ENCODE measurements at regions of chr5 and their contacts with region 1.

Region 1: GRCh38 chr5:104178829-104179456 is 616.4 kb upstream of the NUDT12 start:
- DNase-seq: peak; percentile 51
- ATAC-seq: peak; percentile 94
- H3K4me3 ChIP-seq: no peak overlapping the region
- H3K27ac ChIP-seq: no peak overlapping the region; the same call in 1 of the 2 replicates
- H3K4me1 ChIP-seq: no peaks in the 10 kb centered on the region
- H3K27me3 ChIP-seq: no peaks in the 10 kb centered on the region
- CTCF ChIP-seq: peak; percentile 74

Region 2: GRCh38 chr5:103582364-103582763 is 596.6 kb before region 1 on chr5:
- CTCF ChIA-PET with region 1: no interaction called
- POLR2A ChIA-PET with region 1: no interaction called
- in situ Hi-C with region 1: no loop called
- intact Hi-C with region 1: loop called (anchors 1 kb)
- DNase-seq: no peak
- ATAC-seq: no peak
- H3K4me3 ChIP-seq: no peak overlapping the region
- H3K27ac ChIP-seq: no peak overlapping the region
- H3K4me1 ChIP-seq: no peaks in the 10 kb centered on the region
- H3K27me3 ChIP-seq: peaks cover 6% of the 10 kb centered on the region
- CTCF ChIP-seq: peak; percentile 59; the same call in 1 of the 2 replicates

Region 3: DNA sequence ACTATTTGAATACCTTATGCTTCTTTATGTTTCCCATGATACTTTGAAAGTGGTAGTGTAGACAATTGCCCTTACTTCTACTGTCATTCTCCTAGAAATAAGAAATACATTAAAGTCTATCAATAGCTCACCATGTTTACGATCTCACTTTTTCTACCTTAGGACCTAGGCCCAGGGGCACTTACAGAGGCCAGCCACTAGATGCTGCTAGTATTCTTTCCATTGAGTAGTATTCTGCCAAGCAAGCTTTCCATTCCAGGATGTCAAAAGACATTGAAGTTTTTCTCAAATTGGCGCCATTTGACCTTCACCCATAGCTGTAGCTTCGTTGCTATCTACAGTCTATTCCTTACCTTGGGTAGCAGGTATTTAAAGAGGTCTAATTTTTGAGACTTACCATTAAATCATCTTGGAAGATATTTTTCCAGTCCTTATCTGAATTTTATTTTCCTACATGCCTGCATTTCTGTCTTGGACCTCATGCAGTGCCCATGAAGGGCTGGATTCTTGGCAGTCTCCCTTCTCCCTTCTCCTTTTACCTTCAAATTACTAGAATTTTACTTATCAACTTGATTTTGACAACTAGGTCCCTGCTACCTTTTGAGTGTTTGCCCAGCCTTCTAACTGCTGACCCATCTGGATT is 370.4 kb before region 1 on chr5:
- CTCF ChIA-PET with region 1: interaction called, 10 read pairs
- POLR2A ChIA-PET with region 1: no interaction called
- in situ Hi-C with region 1: no loop called
- intact Hi-C with region 1: loop called (anchors 1 kb)
- DNase-seq: peak; percentile 46
- ATAC-seq: peak; percentile 94
- H3K4me3 ChIP-seq: no peak overlapping the region
- H3K27ac ChIP-seq: peak overlapping the region; percentile 44; the same call in 1 of the 2 replicates
- H3K4me1 ChIP-seq: peaks cover 2% of the 10 kb centered on the region; the same call in 1 of the 2 replicates
- H3K27me3 ChIP-seq: no peaks in the 10 kb centered on the region
- CTCF ChIP-seq: peak; percentile 94

Region 4: GRCh38 chr5:103942587-103943186 is 236.3 kb before region 1 on chr5:
- CTCF ChIA-PET with region 1: no interaction called
- POLR2A ChIA-PET with region 1: no interaction called
- in situ Hi-C with region 1: no loop called
- intact Hi-C with region 1: loop called (anchors 10 kb)
- DNase-seq: no peak
- ATAC-seq: no peak
- H3K4me3 ChIP-seq: no peak overlapping the region
- H3K27ac ChIP-seq: no peak overlapping the region
- H3K4me1 ChIP-seq: no peaks in the 10 kb centered on the region
- H3K27me3 ChIP-seq: no peaks in the 10 kb centered on the region
- CTCF ChIP-seq: peak; percentile 28; the same call in 1 of the 2 replicates

Measured in Panc1 (cell line).